ENCODE measurements at regions of chr7 and their contacts with region 1.

Region 1: DNA sequence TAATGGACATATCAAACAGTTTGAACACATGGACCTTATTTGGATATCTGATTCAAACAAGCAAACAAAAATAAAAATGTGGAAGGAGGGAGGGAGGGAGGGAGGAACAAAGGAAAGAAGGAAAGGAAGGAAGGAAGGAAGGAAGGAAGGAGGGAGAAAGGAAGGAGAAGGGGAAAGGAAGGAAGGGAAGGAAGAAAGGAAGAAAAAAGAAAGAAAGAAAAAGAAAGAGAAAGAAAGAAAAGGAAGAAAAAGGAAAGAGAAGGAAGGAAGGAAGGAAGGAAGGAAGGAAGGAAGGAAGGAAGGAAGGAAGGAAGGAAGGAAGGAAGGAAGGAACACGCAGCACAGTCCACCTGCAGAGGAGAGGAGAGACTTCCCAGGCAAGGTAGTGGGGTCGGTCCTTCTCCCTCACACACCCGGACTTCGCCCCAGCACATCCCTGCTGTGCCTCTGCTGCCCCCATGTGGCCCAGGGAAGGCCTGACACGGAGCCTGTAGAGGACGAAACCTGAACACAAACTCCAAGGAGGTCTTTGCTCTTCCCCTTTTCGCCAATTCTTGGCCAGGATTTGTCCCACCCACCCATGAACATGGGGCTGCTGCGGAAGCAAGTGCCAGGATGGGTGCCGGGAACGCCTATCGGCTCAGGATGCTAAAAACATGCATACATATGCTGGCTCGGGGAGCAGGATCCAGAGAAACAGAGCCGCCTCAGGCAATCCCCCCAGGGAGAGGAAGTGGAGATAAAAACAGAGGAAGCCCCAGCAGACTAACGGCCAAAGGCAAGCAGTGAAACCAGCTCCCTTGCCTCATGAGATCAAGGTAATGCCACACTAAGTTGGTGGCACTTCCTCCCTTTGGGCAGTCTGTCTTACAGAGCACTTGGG is 52.3 kb upstream of the DGKI start:
- DNase-seq: peak; percentile 59
- H3K4me3 Mint-ChIP-seq: no peak overlapping the region
- H3K27ac Mint-ChIP-seq: peak overlapping the region; percentile 64
- H3K4me1 Mint-ChIP-seq: peaks cover 30% of the 10 kb centered on the region
- H3K27me3 Mint-ChIP-seq: no peaks in the 10 kb centered on the region

Region 2: DNA sequence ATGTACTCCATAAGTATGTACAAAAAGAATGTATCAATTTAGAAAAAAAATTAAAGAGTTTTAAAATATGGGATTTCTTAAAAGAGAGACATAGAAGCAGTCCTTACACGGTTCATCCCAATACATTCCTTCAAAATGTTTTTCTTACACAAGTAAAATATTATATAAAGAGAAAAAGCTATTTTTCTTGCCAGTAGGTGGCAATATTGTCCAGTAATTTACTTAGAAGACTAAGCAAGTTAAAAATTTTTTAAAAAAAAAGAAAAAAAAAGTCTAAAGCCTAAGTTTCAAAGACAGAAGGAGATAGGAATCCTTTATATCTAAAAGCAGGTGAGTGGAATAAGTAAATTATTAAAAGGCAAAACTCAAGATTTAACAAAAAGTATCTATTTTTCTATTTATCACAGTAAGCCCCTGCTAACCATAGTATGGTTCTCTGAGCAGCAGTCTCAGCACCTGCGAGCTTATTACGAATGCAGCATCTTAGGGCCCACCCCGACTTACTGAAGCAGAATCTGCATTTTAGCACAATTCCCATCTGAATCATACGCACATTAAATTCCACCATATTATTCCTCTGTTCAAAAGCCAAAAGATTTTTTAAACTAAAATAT is 292.9 kb before region 1 on chr7:
- intact Hi-C with region 1: loop called (anchors 5 kb)
- DNase-seq: no peak
- H3K4me3 Mint-ChIP-seq: no peak overlapping the region
- H3K27ac Mint-ChIP-seq: no peak overlapping the region
- H3K4me1 Mint-ChIP-seq: no peaks in the 10 kb centered on the region
- H3K27me3 Mint-ChIP-seq: no peaks in the 10 kb centered on the region

Region 3: GRCh38 chr7:137694405-137694804 is 204.7 kb before region 1 on chr7:
- intact Hi-C with region 1: no loop called
- DNase-seq: no peak
- H3K4me3 Mint-ChIP-seq: no peak overlapping the region
- H3K27ac Mint-ChIP-seq: no peak overlapping the region
- H3K4me1 Mint-ChIP-seq: no peaks in the 10 kb centered on the region
- H3K27me3 Mint-ChIP-seq: no peaks in the 10 kb centered on the region

Region 4: DNA sequence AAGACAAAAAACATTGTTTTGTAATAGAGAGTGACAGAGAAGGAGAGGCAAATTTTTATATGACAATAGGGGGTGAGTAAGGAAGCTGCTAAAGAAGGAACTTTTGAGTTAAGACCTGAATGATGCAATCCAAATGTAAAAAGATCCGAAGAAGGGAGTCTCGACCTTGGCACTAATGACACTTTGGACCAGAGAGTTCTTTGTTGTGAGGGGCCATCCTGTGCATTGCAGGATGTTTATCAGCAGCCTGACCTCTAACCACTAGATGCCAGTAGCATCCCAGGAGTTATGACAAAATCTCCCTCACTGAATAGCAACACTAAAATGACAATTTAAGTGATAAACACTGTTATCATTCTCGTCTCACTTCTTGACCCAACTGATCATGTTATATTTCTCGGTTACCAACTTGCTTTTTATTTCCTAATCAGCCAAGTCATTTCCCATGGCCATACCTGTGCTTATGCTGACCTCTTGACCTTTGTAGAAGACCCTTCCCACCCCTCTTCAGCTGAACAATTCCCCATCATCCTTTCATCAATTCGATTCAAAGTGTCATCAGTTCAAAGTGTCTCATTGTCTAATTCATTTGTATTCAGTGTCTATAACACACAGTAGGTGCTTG is 82.3 kb before region 1 on chr7:
- intact Hi-C with region 1: loop called (anchors 5 kb)
- DNase-seq: no peak
- H3K4me3 Mint-ChIP-seq: no peak overlapping the region
- H3K27ac Mint-ChIP-seq: no peak overlapping the region
- H3K4me1 Mint-ChIP-seq: no peaks in the 10 kb centered on the region
- H3K27me3 Mint-ChIP-seq: peaks cover 5% of the 10 kb centered on the region

Region 5: GRCh38 chr7:137882261-137882668 is 16.8 kb before region 1 on chr7:
- intact Hi-C with region 1: loop called (anchors 1 kb)
- DNase-seq: no peak
- H3K4me3 Mint-ChIP-seq: no peak overlapping the region
- H3K27ac Mint-ChIP-seq: peak overlapping the region; percentile 2
- H3K4me1 Mint-ChIP-seq: peaks cover 17% of the 10 kb centered on the region
- H3K27me3 Mint-ChIP-seq: no peaks in the 10 kb centered on the region

Region 6: GRCh38 chr7:138008547-138009349 is 109.7 kb after region 1 on chr7:
- intact Hi-C with region 1: loop called (anchors 1 kb)
- DNase-seq: peak; percentile 15
- H3K4me3 Mint-ChIP-seq: no peak overlapping the region
- H3K27ac Mint-ChIP-seq: no peak overlapping the region
- H3K4me1 Mint-ChIP-seq: peaks cover 4% of the 10 kb centered on the region
- H3K27me3 Mint-ChIP-seq: peaks cover 12% of the 10 kb centered on the region

Measured in activated T-helper 2 cell treated with anti-CD3 and anti-CD28 coated beads, Interferon-gamma antibody, Interleukin-2, Interleukin-4, amounts not matched to agents 10 μg/mL and 5 μg/mL and 100 μg/mL, durations not matched to agents 14 hours and 24 hours and 36 hours (primary cell).